Heart right ventricle (tissue), 16 donors: ENCODE measurements at regions of chr11 and their contacts with region 1.

Region 1: GRCh38 chr11:43282607-43283440 is 29.0 kb upstream of the API5 start:
- DNase-seq: peak in 1 of 2 donors; percentile 43
- ATAC-seq: peak in 2 of 8 donors; percentile 42 to 51
- H3K4me3 ChIP-seq: no peak overlapping the region
- H3K27ac ChIP-seq: no peak overlapping the region
- H3K4me1 ChIP-seq: peaks cover 0 to 10% (median 0%) of the 10 kb centered on the region in 9 donors
- H3K27me3 ChIP-seq: peaks cover 0 to 51% (median 28%) of the 10 kb centered on the region in 7 donors
- CTCF ChIP-seq: peak; percentile 80 to 94 (median 91)

Region 2: DNA sequence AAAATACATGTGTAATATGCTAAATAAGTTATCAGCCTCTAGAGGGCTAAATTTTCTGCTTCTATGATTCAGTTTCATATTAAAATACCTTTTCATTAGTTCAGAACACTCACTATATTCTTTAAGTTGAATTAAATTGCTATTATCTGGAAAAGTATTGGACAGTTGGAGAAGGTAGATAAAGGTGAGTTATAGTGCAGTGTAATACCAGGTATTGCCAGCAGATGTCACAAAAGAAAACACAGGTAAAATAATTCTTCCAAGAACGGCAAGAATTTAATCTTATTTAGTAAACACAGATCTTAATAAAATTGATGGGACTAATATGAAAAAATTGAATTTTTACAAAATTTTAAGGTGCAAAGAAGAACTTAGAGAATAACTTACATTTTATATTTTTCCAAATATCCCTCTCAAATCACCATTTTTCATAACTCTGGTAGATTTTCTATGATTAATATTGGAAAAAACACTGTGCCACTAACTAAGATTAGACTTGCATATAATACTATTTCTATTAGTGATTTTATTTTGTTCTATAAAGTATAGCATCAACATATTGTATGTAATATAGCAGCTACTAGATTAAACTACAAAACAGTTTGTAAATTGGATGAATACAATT is 1821.7 kb before region 1 on chr11:
- intact Hi-C with region 1: loop called in 6 of 10 experiments (anchors 5 to 10 kb)
- DNase-seq: no peak
- ATAC-seq: no peak
- H3K4me3 ChIP-seq: no peak overlapping the region
- H3K27ac ChIP-seq: no peak overlapping the region
- H3K4me1 ChIP-seq: no peaks in the 10 kb centered on the region
- H3K27me3 ChIP-seq: peaks cover 0 to 50% (median 25%) of the 10 kb centered on the region in 7 donors
- CTCF ChIP-seq: peak; percentile 22 to 68 (median 61)

Region 3: GRCh38 chr11:41498726-41499125 is 1784.1 kb before region 1 on chr11:
- intact Hi-C with region 1: loop called in 1 of 10 experiments (anchors 10 kb)
- DNase-seq: no peak
- ATAC-seq: no peak
- H3K4me3 ChIP-seq: no peak overlapping the region
- H3K27ac ChIP-seq: no peak overlapping the region
- H3K4me1 ChIP-seq: no peaks in the 10 kb centered on the region
- H3K27me3 ChIP-seq: peaks cover 0 to 17% (median 0%) of the 10 kb centered on the region in 7 donors
- CTCF ChIP-seq: peak in 5 of 9 donors; percentile 8 to 35 (median 18)

Region 4: GRCh38 chr11:42778193-42778592 is 504.6 kb before region 1 on chr11:
- intact Hi-C with region 1: loop called in 7 of 10 experiments (anchors 5 kb)
- DNase-seq: no peak
- ATAC-seq: no peak
- H3K4me3 ChIP-seq: no peak overlapping the region
- H3K27ac ChIP-seq: no peak overlapping the region
- H3K4me1 ChIP-seq: no peaks in the 10 kb centered on the region
- H3K27me3 ChIP-seq: peaks cover 0 to 7% (median 0%) of the 10 kb centered on the region in 7 donors
- CTCF ChIP-seq: no peak